ENCODE measurements at regions of chr7 and their contacts with region 1.

Region 1: GRCh38 chr7:31443457-31443856 is 70.4 kb upstream of the ITPRID1 start:
- DNase-seq: peak; percentile 42
- CTCF ChIP-seq: peak; percentile 79

Region 2: GRCh38 chr7:31151849-31152248 is 291.6 kb before region 1 on chr7:
- CTCF ChIA-PET with region 1: no interaction called
- POLR2A ChIA-PET with region 1: no interaction called
- DNase-seq: no peak
- CTCF ChIP-seq: no peak

Region 3: GRCh38 chr7:31419505-31420055 is 23.9 kb before region 1 on chr7:
- CTCF ChIA-PET with region 1: interaction called, 19 read pairs
- POLR2A ChIA-PET with region 1: no interaction called
- DNase-seq: no peak
- CTCF ChIP-seq: no peak

Region 4: DNA sequence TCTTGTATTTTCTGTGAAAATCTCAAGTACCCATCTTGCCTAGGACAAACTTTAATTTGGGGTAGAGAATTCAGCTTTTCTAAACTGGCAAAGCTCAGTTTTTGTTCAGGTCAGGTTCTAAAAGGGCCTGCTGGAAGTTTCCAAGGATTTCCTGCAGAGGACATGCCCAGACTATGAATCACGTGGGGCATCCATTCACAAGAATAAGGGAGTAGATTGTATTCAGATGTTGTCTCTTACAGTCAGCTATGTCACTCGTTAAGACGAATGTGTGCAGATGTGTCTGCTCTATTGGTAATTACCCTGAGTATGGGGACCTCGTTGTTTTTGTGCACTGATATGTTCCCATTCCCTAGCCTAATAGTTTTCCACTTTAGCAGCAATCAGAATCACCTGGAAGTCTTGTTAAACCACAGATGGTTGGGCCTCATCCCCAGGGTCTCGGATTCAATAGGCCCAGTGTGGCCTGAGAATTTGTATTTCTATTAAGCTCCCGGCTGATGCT is 10.6 kb before region 1 on chr7:
- CTCF ChIA-PET with region 1: interaction called, 11 read pairs
- POLR2A ChIA-PET with region 1: no interaction called
- DNase-seq: no peak
- CTCF ChIP-seq: no peak

Region 5: DNA sequence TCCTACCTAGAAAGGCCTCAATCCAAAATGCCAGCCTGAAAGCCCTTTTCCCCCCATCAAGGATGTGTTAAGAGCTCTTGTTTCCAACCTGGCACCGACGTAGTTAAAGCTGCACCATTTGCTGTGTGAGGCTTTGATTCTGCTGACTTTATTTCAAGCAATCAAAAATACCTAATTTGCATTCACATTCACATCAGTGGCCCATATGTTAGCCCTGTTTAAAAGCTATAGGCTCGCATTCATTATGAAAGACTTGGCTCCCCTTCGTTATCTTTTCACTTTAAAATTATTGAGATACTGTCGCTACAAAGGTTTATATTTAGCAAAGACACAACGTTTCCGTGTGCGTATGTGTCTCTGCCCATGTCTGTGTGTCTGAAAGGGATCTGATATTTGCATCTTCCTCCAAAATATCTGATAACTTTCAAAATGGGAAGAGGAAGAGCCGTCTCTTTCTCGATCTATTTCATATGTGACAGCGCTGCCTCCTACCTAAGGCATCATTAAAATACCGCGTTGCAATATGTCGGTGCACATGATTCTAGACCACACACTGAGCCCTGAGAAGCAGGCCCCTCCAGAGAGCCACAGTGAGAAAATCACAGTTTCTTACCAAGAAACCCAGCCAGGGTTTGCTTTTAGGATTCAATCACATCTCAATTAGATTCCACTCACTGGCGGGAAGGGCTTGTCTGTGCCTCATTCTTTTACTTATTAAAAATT is 13.3 kb after region 1 on chr7:
- CTCF ChIA-PET with region 1: interaction called, 34 read pairs
- POLR2A ChIA-PET with region 1: no interaction called
- DNase-seq: no peak
- CTCF ChIP-seq: no peak

Region 6: GRCh38 chr7:31488562-31489203 is 45.2 kb after region 1 on chr7:
- CTCF ChIA-PET with region 1: interaction called, 22 read pairs
- POLR2A ChIA-PET with region 1: no interaction called
- DNase-seq: peak; percentile 74
- CTCF ChIP-seq: peak; percentile 65

Region 7: GRCh38 chr7:31633894-31634494 is 190.5 kb after region 1 on chr7:
- CTCF ChIA-PET with region 1: interaction called, 17 read pairs
- POLR2A ChIA-PET with region 1: no interaction called
- DNase-seq: peak; percentile 22
- CTCF ChIP-seq: peak; percentile 43

Region 8: DNA sequence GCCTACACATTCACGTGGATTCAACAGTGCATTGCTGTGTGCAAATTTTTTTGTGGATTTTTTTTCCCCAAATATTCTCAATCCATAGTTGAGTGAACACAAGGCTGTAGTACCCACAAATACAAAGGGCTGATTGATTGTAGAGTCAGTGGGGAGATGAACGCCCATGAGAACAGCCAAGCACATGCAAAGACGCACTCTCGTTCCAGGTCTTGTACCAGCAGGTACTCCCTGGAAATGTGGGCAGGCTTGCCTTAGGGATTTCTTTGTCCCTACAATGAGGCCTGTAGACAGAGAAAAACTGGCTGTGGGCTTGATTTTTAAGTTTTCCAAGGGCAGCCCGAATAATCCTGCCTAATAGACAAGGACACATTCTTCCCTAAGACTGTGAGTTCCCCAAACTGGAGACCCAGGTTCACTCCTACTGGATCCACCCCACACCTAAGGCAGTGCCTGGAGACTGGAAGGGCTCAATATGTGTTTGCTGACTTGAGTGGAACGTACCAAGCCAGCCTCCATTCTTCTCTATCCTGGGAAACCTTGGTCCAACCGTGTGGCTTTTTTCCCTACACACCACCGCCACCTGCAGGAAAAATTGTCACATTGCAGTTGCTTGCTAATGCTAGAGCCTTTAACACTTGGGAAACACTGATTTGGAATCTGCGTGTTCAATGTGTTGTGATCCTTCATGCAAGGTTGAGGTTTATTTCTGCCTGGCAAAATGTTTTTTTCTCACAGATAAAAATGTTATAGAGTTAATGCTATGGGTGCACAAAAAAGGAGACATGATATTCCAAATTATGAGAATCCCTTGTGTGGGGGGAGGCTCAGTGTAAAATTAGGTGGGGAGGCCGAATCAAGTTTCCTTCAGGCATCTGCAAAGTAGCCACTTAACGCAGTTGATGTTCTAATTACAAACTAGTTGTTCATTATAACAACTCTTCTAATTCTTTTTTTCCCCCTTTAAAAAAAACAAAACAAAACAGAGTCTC is 292.8 kb after region 1 on chr7:
- CTCF ChIA-PET with region 1: interaction called, 15 read pairs
- POLR2A ChIA-PET with region 1: no interaction called
- DNase-seq: peak; percentile 44
- CTCF ChIP-seq: peak; percentile 80